Ascending aorta (tissue), 2 donors: ENCODE measurements at regions of chr1 and their contacts with region 1.

Region 1: DNA sequence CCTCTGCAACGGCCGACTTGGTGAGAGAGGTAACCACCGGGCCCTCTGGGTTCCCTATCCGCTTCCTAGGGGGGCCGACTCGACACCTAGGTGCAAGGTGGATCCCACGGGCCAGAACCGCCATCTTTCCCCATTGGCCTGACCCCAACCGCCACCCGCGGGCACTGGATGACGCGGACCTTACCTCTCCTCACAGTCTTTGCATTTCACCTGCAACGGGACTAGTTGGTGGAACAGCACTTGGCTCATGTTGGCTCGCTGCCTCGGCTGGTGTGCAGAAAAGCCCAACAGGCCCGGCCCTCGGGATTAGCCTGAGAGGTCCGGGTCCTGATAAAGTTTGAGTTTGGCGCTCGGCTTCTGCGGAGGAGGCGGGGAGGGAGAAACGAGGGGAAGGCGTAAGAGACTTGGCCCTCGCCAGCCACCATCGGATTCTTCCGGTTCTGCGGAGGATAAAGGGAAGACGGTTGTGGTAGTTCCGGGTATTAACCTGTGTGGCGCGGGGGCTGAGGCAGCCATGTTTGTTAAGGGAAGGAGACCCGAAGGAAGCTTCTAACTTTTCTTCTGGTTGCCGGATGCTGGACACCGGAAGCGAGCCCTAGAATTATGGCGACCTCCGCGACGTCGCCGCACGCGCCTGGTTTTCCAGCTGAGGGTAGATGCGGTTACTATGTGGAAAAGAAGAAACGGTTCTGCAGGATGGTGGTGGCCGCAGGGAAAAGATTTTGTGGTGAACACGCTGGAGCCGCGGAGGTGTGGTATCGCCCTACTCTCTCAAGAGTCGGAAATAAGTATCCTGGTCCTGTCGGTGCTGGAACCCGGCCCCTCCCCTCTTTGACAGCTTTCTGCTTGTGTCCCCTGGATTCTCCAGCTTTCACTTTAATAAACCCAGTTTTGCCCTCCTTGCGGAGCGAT is at the starts of genes SASS6 and TRMT13:
- DNase-seq: peak; percentile 79 to 98
- H3K4me3 ChIP-seq: peak within 1 kb of the TSS; percentile 73 to 80
- H3K27ac ChIP-seq: peak within 1 kb of the TSS; percentile 35 to 53
- H3K4me1 ChIP-seq: peaks cover 0 to 12% of the 10 kb centered on the region in 2 donors
- H3K27me3 ChIP-seq: no peaks in the 10 kb centered on the region
- CTCF ChIP-seq: no peak
- total RNA-seq, gene SASS6: 7.0 TPM
- total RNA-seq, gene TRMT13: 11.4 TPM

Region 2: GRCh38 chr1:99849744-99850458 is 282.9 kb before region 1 on chr1 and contains the start of gene AGL:
- intact Hi-C with region 1: loop called (anchors 5 kb)
- DNase-seq: peak; percentile 39 to 89
- H3K4me3 ChIP-seq: peak within 1 kb of the TSS; percentile 84 to 86
- H3K27ac ChIP-seq: peak within 1 kb of the TSS; percentile 89
- H3K4me1 ChIP-seq: peaks cover 4 to 6% of the 10 kb centered on the region in 2 donors
- H3K27me3 ChIP-seq: no peaks in the 10 kb centered on the region
- CTCF ChIP-seq: no peak
- total RNA-seq, gene AGL: 9.9 TPM

Region 3: GRCh38 chr1:99886841-99887240 is 246.0 kb before region 1 on chr1:
- intact Hi-C with region 1: no loop called
- DNase-seq: no peak
- H3K4me3 ChIP-seq: no peak overlapping the region
- H3K27ac ChIP-seq: no peak overlapping the region
- H3K4me1 ChIP-seq: no peaks in the 10 kb centered on the region
- H3K27me3 ChIP-seq: no peaks in the 10 kb centered on the region
- CTCF ChIP-seq: no peak

Region 4: GRCh38 chr1:100037927-100038659 is 94.7 kb before region 1 on chr1:
- intact Hi-C with region 1: loop called (anchors 2 kb)
- DNase-seq: peak; percentile 59 to 95
- H3K4me3 ChIP-seq: peak overlapping the region; percentile 93 to 94
- H3K27ac ChIP-seq: peak overlapping the region; percentile 97 to 98
- H3K4me1 ChIP-seq: peaks cover 4 to 9% of the 10 kb centered on the region in 2 donors
- H3K27me3 ChIP-seq: no peaks in the 10 kb centered on the region
- CTCF ChIP-seq: no peak

Region 5: DNA sequence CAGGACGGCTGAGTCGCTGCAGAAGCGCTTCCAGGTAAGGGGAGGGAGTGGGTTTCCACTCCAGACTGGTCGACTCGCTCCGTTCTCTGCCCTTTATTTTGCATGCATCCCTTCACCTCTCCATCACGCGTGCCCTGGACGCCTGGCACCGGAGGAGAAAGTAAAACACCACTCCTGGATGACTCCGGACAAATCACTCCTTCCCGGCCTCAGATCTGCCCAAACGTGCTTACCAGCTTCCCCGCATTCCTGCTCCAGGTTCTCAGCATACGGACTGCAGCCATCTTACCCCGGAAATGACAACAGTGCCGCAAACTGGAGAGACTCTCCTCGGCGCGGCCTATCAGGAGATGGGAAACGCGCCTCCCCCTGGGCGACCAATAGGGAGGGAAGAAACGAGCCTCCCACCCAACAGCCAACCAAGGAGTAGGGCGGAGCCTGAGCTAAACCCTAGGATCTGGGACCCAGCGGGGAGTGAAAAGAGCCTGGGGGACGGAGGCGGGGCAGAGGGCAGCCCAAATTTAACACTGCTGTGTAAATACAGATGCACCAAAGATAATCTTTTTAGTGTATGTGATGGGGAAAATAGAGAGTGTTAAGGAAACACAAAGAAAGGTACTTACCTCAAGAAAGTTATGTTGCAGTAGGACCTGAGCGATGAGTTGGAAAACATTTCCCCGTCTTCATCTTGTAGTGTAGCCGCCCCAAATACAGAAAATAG is 116.9 kb after region 1 on chr1 and contains the start of gene DBT:
- intact Hi-C with region 1: loop called (anchors 5 kb)
- DNase-seq: peak; percentile 86 to 98
- H3K4me3 ChIP-seq: peak within 1 kb of the TSS; percentile 57 to 85
- H3K27ac ChIP-seq: peak within 1 kb of the TSS; percentile 85 to 86
- H3K4me1 ChIP-seq: no peaks in the 10 kb centered on the region
- H3K27me3 ChIP-seq: no peaks in the 10 kb centered on the region
- CTCF ChIP-seq: no peak
- total RNA-seq, gene DBT: 2.3 TPM

Region 6: DNA sequence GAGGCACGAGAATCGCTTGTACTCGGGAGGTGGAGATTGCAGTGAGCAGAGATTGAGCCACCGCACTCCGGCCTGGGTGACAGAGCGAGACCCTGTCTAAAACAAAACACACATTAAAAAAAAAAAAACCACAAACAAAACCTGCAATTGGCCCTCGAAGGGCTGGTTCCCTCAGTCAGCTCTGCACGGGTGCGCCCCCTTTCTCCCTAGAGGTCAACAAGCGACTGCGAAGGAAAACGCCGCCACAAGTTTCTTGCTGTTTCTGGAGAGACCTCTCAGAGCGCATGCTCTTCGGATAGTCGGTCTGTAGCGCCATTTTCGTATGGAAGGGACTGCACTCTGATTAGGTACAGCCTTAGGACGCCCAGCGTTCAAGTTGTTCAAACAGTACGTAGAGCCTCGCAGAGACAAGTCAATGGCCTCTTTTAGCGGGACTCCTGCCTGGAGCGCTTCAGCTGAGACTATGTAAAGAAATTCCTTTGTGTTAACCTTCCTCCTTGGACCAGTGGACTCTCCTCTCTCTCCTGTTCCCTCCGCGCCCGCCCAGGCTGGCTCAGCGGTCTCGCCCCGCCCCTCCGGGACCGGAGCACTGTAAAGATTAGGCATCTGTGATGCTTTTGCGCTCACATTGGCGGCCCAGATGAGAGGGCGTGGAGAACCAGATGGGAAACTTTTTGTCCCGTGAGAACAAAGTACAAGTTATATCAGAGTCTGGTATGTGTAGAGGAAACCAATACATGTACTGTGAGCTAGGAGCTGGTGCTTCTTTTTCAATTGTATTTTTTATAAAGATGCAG is 218.5 kb after region 1 on chr1:
- intact Hi-C with region 1: loop called (anchors 1 kb)
- DNase-seq: peak; percentile 49 to 91
- H3K4me3 ChIP-seq: peak overlapping the region; percentile 82 to 86
- H3K27ac ChIP-seq: peak overlapping the region; percentile 85 to 86
- H3K4me1 ChIP-seq: peaks cover 0 to 17% of the 10 kb centered on the region in 2 donors
- H3K27me3 ChIP-seq: no peaks in the 10 kb centered on the region
- CTCF ChIP-seq: peak in 2 of 3 experiments; percentile 19 to 29

Region 7: DNA sequence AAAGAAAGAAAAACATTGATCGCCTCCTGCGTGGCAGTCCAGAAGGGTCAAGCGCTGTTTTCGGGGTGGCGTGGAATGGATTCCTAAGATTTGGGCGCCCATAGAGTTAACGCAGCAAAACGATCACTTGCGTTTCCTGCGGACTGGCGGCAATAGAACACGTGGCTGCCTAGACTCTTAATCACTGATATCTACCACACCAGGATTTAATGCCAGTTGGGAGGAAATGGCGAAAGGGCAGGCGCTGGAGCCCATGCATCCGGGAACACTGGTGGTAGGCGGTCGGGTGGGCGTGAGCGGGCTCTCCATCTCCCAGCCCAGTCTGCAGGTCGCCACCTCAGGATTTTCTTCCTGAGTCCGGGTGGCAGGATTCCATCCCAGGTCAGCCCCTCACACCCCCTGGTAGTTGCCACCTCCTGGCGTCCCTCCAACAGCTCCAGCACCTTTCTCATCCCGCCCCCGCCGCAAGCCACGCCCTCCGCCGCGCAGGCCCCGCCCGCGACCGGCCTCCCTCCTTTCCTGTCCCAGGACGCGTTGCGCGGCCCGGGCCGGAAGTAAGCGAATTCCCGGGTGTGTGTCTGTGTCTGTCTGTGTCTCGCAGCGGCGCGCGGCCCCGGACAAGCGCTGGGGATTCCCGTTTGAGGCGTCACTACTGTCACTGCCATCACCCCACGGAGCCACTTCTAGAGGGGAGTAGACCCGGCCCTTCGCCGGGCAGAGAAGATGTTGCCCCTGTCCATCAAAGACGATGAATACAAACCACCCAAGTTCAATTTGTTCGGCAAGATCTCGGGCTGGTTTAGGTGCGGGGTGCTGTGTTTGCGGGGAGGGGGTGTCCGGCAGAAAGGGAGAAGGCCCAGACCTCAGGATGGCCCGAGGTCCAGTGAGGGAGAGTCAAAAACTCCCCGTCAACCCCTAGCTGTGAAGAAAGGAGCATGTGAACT is 763.0 kb after region 1 on chr1 and contains the start of gene SLC30A7:
- intact Hi-C with region 1: loop called (anchors 2 kb)
- DNase-seq: peak; percentile 84 to 97
- H3K4me3 ChIP-seq: peak within 1 kb of the TSS; percentile 77 to 79
- H3K27ac ChIP-seq: peak within 1 kb of the TSS; percentile 96 to 97
- H3K4me1 ChIP-seq: peaks cover 0 to 13% of the 10 kb centered on the region in 2 donors
- H3K27me3 ChIP-seq: no peaks in the 10 kb centered on the region
- CTCF ChIP-seq: no peak
- total RNA-seq, gene SLC30A7: 12.1 TPM